Activated T-helper 1 cell treated with anti-CD3 and anti-CD28 coated beads, Interleukin-12 subunit alpha, Interleukin-12 subunit beta, Interleukin-2, Interleukin-4 antibody, amounts not matched to agents 30 ng/mL and 10 ng/mL and 1 ng/mL, durations not matched to agents 14 hours and 24 hours and 36 hours (primary cell): ENCODE measurements at regions of chrX and their contacts with region 1.

Region 1: GRCh38 chrX:68828740-68829552 is at the start of gene EFNB1:
- DNase-seq: peak; percentile 81
- H3K4me3 Mint-ChIP-seq: peak within 1 kb of the TSS; percentile 93
- H3K27ac Mint-ChIP-seq: peak within 1 kb of the TSS; percentile 69
- H3K4me1 Mint-ChIP-seq: peaks cover 23% of the 10 kb centered on the region
- H3K27me3 Mint-ChIP-seq: peaks cover 16% of the 10 kb centered on the region
- total RNA-seq, gene EFNB1: 7.3 and 8.0 TPM in 2 replicates

Region 2: DNA sequence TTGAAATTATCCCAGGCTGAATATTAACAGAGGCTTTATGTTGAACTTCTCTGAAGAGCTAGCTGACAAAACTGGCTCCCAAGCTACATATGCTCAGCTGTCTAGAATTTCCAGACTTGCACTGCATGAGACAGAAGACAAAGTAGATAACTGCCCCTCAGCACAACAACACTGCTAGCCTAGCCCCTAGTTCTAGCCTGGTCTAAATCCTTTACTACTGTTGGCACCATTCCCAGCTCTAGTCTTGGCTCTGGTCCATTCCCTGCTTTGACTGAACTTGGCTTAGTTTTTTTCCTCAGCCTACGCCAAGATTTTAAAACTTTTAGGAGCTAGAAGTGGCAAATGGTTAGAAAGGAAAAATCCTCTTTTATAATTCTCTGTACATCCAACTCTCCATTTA is 388.0 kb before region 1 on chrX:
- intact Hi-C with region 1: no loop called
- DNase-seq: no peak
- H3K4me3 Mint-ChIP-seq: no peak overlapping the region
- H3K27ac Mint-ChIP-seq: no peak overlapping the region
- H3K4me1 Mint-ChIP-seq: peaks cover 5% of the 10 kb centered on the region
- H3K27me3 Mint-ChIP-seq: peaks cover 8% of the 10 kb centered on the region

Region 3: GRCh38 chrX:68504237-68504636 is 324.7 kb before region 1 on chrX:
- intact Hi-C with region 1: loop called (anchors 5 kb)
- DNase-seq: peak; percentile 8
- H3K4me3 Mint-ChIP-seq: no peak overlapping the region
- H3K27ac Mint-ChIP-seq: peak overlapping the region; percentile 67
- H3K4me1 Mint-ChIP-seq: peaks cover 40% of the 10 kb centered on the region
- H3K27me3 Mint-ChIP-seq: no peaks in the 10 kb centered on the region

Region 4: GRCh38 chrX:68634654-68635232 is 194.2 kb before region 1 on chrX:
- intact Hi-C with region 1: no loop called
- DNase-seq: no peak
- H3K4me3 Mint-ChIP-seq: no peak overlapping the region
- H3K27ac Mint-ChIP-seq: no peak overlapping the region
- H3K4me1 Mint-ChIP-seq: no peaks in the 10 kb centered on the region
- H3K27me3 Mint-ChIP-seq: no peaks in the 10 kb centered on the region

Region 5: DNA sequence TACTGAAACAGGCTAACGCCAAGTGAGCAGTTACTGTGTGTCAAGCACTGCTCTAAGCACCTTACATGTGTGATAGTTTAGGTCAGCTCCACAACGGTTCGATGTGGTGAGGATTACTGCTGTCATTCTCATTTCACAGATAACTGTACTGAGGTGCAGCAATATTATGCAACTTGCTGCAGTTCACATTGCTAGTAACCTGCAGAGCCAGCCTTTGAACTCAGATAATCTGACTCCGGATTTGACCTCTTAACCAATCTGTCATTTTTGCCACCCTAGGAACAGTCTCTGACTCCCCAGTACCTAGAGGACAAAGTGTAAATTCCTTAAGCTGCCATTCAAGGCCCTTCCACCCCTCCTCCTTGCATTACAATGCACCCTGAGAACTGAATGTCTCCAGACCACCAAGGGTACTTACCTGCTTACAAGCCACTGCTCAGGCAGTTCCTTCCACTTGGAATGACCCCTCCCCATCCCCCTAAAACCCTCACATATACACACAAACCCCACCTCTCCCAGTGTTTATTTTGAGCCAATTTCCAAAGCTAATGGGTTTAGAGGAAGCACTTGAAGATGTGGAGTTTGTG is 24.8 kb after region 1 on chrX:
- intact Hi-C with region 1: no loop called
- DNase-seq: no peak
- H3K4me3 Mint-ChIP-seq: no peak overlapping the region
- H3K27ac Mint-ChIP-seq: no peak overlapping the region
- H3K4me1 Mint-ChIP-seq: no peaks in the 10 kb centered on the region
- H3K27me3 Mint-ChIP-seq: no peaks in the 10 kb centered on the region

Region 6: GRCh38 chrX:68936608-68937007 is 107.7 kb after region 1 on chrX:
- intact Hi-C with region 1: no loop called
- DNase-seq: no peak
- H3K4me3 Mint-ChIP-seq: no peak overlapping the region
- H3K27ac Mint-ChIP-seq: no peak overlapping the region
- H3K4me1 Mint-ChIP-seq: no peaks in the 10 kb centered on the region
- H3K27me3 Mint-ChIP-seq: no peaks in the 10 kb centered on the region

Region 7: DNA sequence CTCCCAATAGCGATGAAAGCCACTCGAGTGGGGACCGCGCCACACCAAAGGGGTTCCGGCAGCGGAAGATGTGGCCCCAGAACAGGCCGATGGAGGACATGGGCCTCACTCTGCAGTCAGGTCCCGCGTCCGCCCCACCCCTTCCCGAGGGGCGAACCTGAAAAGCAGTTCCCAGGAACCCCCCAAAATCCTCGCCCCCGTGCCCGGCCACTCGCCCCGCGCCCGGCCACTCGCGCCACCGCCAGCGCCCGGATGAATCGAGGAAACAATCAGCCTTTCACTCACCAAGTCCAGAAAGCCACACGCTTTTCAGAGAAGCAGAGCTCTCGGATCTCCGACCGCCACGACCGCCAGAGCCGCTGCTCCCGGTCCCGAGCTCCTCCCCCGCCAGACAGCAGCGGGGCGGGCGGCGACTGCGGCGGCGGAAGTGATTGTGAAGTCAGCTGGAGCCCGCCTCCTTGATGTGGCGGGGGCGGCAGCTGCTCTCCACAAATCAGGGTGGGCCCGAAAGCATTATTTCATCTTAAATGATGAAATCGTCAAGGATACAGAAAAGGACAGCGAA is 336.2 kb after region 1 on chrX and contains the start of gene PJA1:
- intact Hi-C with region 1: loop called (anchors 2 kb)
- DNase-seq: peak; percentile 50
- H3K4me3 Mint-ChIP-seq: peak within 1 kb of the TSS; percentile 92
- H3K27ac Mint-ChIP-seq: peak within 1 kb of the TSS; percentile 94
- H3K4me1 Mint-ChIP-seq: peaks cover 25% of the 10 kb centered on the region
- H3K27me3 Mint-ChIP-seq: peaks cover 7% of the 10 kb centered on the region
- total RNA-seq, gene PJA1: 14.5 and 15.6 TPM in 2 replicates

Region 8: DNA sequence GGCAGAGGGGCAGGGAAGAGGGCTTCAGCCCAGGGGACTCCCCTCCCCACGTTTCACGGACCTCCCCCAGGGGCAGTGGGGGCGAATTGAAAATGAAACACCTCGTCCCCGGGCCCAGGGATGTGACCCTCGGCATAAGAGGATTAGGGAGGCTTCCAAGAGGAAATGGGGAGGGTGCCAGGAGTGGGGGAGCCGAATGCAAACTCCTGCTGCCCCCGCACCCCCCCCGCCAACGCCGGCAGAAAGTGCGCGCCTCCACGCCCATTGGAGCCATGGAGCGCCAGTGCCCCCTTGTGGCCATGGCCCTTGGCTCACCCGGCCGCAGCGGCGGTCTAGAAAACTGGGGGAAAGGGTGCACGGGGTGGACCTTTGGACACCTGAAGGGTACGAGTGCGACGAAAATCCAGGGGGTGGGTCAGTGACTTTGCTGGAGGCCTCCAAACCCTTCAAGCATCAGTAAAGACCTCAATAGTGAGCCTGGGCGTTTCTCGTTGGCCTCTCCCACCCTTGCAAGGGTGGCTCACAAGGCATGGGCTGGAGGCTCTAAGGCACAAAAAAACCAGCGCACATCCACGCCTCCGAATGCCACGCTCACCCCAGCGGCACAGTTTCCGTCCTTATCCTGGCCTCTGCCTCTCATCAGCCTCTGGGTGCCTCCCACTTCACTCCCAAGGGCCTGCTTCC is 457.1 kb after region 1 on chrX:
- intact Hi-C with region 1: loop called (anchors 1 kb)
- DNase-seq: peak; percentile 30
- H3K4me3 Mint-ChIP-seq: no peak overlapping the region
- H3K27ac Mint-ChIP-seq: no peak overlapping the region
- H3K4me1 Mint-ChIP-seq: no peaks in the 10 kb centered on the region
- H3K27me3 Mint-ChIP-seq: no peaks in the 10 kb centered on the region

Region 9: GRCh38 chrX:69387567-69388487 is 558.9 kb after region 1 on chrX:
- intact Hi-C with region 1: loop called (anchors 5 kb)
- DNase-seq: peak; percentile 0
- H3K4me3 Mint-ChIP-seq: no peak overlapping the region
- H3K27ac Mint-ChIP-seq: no peak overlapping the region
- H3K4me1 Mint-ChIP-seq: no peaks in the 10 kb centered on the region
- H3K27me3 Mint-ChIP-seq: peaks cover 3% of the 10 kb centered on the region